A673 (cell line): ENCODE measurements at regions of chr19 and their contacts with region 1.

Region 1: GRCh38 chr19:1794424-1795172 is 17.5 kb downstream of the ATP8B3 start:
- DNase-seq: no peak
- H3K4me3 ChIP-seq: no peak overlapping the region
- H3K27ac ChIP-seq: no peak overlapping the region
- H3K4me1 ChIP-seq: no peaks in the 10 kb centered on the region
- H3K27me3 ChIP-seq: peaks cover 1% of the 10 kb centered on the region
- CTCF ChIP-seq: no peak

Region 2: GRCh38 chr19:1533510-1534150 is 261.0 kb before region 1 on chr19:
- CTCF ChIA-PET with region 1: interaction called, 15 read pairs
- POLR2A ChIA-PET with region 1: no interaction called
- intact Hi-C with region 1: no loop called
- DNase-seq: no peak
- H3K4me3 ChIP-seq: no peak overlapping the region
- H3K27ac ChIP-seq: no peak overlapping the region
- H3K4me1 ChIP-seq: peaks cover 3% of the 10 kb centered on the region
- H3K27me3 ChIP-seq: no peaks in the 10 kb centered on the region
- CTCF ChIP-seq: no peak

Region 3: DNA sequence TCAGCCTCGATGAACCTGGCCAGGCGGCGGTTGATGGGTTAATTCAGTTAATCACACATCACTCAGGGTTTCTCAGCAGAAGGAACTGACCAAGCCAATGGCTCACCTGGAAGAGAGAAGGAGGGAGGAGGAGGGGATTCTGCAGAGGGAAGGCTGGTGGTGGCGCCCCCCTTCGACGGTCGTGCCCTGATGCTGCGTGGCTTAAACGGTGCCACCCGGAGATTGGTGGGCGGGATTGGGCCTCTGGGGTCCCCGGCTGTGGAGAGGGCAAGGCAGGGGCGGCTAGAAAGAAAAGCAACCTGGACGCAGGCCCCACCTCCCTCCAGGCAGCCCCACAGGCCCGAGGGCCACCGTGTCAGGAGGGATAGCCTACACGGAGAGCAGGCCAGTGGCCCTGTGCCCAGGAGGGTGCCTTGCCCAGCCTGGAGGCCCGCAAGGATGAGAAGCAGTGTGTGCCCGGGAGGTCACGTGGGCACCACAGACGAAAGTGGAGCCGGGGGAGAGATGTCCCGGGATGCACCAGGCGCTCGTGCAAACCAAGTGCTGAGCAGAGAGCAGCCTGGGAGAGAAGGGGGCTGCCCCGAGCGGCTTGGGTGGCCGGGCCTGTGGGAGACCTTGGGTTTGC is 162.4 kb after region 1 on chr19:
- CTCF ChIA-PET with region 1: no interaction called
- POLR2A ChIA-PET with region 1: no interaction called
- intact Hi-C with region 1: no loop called
- DNase-seq: no peak
- H3K4me3 ChIP-seq: no peak overlapping the region
- H3K27ac ChIP-seq: no peak overlapping the region
- H3K4me1 ChIP-seq: no peaks in the 10 kb centered on the region
- H3K27me3 ChIP-seq: no peaks in the 10 kb centered on the region
- CTCF ChIP-seq: 0 out of 2 replicates have a peak, but pooled peaks have one; percentile 12